H1 (cell line): ENCODE measurements at regions of chr17 and their contacts with region 1.

Region 1: DNA sequence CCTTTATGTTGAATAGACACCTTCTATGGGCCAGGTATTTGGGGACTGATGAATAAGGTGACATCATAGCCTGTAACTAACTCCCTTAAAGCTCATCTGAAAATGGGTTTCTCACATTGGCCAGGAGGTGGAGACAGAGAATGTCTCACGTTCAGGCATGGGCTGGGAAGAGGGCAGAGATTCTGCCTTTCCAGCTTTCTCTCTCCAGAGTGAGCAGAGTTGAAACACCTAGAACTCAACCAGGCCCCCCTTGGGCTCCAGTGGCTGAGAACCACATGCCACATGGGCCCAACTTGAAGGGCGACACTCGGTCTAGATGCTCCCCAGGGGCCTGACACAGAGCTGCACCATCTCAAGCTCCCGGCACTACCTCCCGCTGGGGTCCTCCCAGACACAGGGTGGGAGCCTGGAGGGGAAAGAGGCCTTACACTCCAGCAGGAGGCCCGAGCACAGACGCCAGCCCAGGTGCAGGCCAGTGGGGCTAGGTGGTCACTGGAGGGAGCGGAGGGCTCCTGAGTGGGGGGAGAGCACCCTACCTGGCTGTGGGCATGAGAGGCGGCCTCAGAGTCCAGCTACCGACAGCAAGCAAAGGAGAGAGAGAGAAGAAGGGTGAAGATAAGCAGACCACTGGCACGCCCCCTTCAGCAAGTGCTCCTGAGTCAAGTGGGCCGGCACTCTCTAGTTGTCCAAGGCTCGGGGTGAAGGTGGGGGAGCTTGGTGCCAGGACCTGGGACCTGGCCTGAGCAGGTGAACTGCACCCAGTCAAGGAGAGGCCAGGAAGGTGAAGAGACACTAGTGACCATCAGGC is 55.9 kb downstream of the MYO18A start:
- DNase-seq: peak in 1 of 2 experiments; percentile 57
- H3K4me3 ChIP-seq: no peak overlapping the region
- H3K27ac ChIP-seq: no peak overlapping the region
- H3K4me1 ChIP-seq: peaks cover 0 to 7% (median 2%) of the 10 kb centered on the region in 4 experiments; a peak in 3 of 7 replicates
- H3K27me3 ChIP-seq: no peaks in the 10 kb centered on the region
- CTCF ChIP-seq: peak; percentile 48 to 92 (median 85)
- EP300 ChIP-seq: no peak
- POLR2A ChIP-seq: no peak
- RAD21 ChIP-seq: peak; percentile 92 to 93

Region 2: GRCh38 chr17:29061036-29061435 is 63.3 kb before region 1 on chr17:
- CTCF ChIA-PET with region 1: no interaction called
- POLR2A ChIA-PET with region 1: no interaction called
- DNase-seq: no peak
- H3K4me3 ChIP-seq: no peak overlapping the region
- H3K27ac ChIP-seq: no peak overlapping the region
- H3K4me1 ChIP-seq: peaks cover 9 to 26% (median 18%) of the 10 kb centered on the region in 4 experiments
- H3K27me3 ChIP-seq: 0 out of 7 replicates have a peak, but pooled peaks cover 0 to under 1% (median 0%) of the 10 kb centered on the region in 4 experiments
- CTCF ChIP-seq: no peak
- EP300 ChIP-seq: no peak
- POLR2A ChIP-seq: no peak
- RAD21 ChIP-seq: no peak

Region 3: GRCh38 chr17:29090750-29091603 is 33.3 kb before region 1 on chr17:
- CTCF ChIA-PET with region 1: interaction called, 14 read pairs
- POLR2A ChIA-PET with region 1: no interaction called
- DNase-seq: no peak
- H3K4me3 ChIP-seq: no peak overlapping the region
- H3K27ac ChIP-seq: no peak overlapping the region
- H3K4me1 ChIP-seq: peaks cover 0 to 19% (median 7%) of the 10 kb centered on the region in 4 experiments; a peak in 6 of 7 replicates
- H3K27me3 ChIP-seq: no peaks in the 10 kb centered on the region
- CTCF ChIP-seq: peak in 2 of 3 experiments; percentile 7 to 20; a peak in 2 of 4 replicates
- EP300 ChIP-seq: no peak
- POLR2A ChIP-seq: no peak
- RAD21 ChIP-seq: peak; percentile 36 to 55

Region 4: DNA sequence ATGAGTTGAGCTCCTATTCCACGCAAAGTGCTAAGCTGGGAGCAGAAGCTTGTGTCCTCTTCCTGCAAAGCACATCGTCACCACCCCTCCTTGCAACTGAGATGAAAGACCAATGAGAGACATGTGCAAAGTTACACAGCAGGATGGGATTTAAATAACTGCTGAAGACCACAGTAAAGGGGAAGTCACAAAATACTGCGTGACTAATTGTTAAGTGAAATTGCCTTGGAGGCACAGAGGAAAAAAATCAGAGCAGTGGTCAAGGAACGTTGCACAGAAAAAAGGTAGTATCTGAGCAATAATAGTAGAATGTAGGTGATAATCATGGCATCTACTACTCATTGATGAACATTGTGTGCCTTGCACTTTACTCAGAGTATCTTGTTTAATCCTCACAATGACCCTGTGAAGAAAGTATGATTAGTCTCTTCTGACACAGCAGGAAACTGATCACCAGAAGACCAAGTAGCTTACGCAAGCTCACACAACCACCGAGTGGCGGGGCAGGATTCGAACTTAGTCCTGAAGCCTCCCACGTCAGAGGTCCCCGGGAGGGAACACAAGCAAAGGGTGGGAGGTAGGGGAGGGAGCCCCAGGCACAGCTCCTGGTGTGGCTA is 71.3 kb after region 1 on chr17:
- CTCF ChIA-PET with region 1: interaction called, 17 read pairs
- POLR2A ChIA-PET with region 1: no interaction called
- DNase-seq: no peak
- H3K4me3 ChIP-seq: no peak overlapping the region
- H3K27ac ChIP-seq: no peak overlapping the region
- H3K4me1 ChIP-seq: peaks cover 0 to 3% (median 0%) of the 10 kb centered on the region in 4 experiments; a peak in 1 of 7 replicates
- H3K27me3 ChIP-seq: no peaks in the 10 kb centered on the region
- CTCF ChIP-seq: no peak
- EP300 ChIP-seq: no peak
- POLR2A ChIP-seq: no peak
- RAD21 ChIP-seq: no peak

Region 5: GRCh38 chr17:29241015-29241963 is 117.0 kb after region 1 on chr17:
- CTCF ChIA-PET with region 1: interaction called, 10 read pairs
- POLR2A ChIA-PET with region 1: no interaction called
- DNase-seq: peak in 1 of 2 experiments; percentile 67
- H3K4me3 ChIP-seq: peak overlapping the region in 1 of 4 experiments; percentile 4; a peak in 2 of 8 replicates
- H3K27ac ChIP-seq: peak overlapping the region; percentile 51
- H3K4me1 ChIP-seq: peaks cover 7 to 13% (median 9%) of the 10 kb centered on the region in 4 experiments; a peak in 6 of 7 replicates
- H3K27me3 ChIP-seq: no peaks in the 10 kb centered on the region; a peak in 1 of 7 replicates
- CTCF ChIP-seq: no peak
- EP300 ChIP-seq: no peak
- POLR2A ChIP-seq: 0 out of 3 replicates have a peak, but pooled peaks of 1 of the 2 experiments have one; percentile 44
- RAD21 ChIP-seq: no peak

Region 6: GRCh38 chr17:29252101-29252866 is 128.0 kb after region 1 on chr17:
- CTCF ChIA-PET with region 1: interaction called, 11 read pairs
- POLR2A ChIA-PET with region 1: interaction called, 4 read pairs
- DNase-seq: no peak
- H3K4me3 ChIP-seq: no peak overlapping the region
- H3K27ac ChIP-seq: no peak overlapping the region
- H3K4me1 ChIP-seq: peaks cover 0 to 3% (median 0%) of the 10 kb centered on the region in 4 experiments; a peak in 1 of 7 replicates
- H3K27me3 ChIP-seq: no peaks in the 10 kb centered on the region
- CTCF ChIP-seq: peak in 2 of 3 experiments; percentile 28 to 56; a peak in 2 of 4 replicates
- EP300 ChIP-seq: no peak
- POLR2A ChIP-seq: no peak
- RAD21 ChIP-seq: peak; percentile 37

Region 7: DNA sequence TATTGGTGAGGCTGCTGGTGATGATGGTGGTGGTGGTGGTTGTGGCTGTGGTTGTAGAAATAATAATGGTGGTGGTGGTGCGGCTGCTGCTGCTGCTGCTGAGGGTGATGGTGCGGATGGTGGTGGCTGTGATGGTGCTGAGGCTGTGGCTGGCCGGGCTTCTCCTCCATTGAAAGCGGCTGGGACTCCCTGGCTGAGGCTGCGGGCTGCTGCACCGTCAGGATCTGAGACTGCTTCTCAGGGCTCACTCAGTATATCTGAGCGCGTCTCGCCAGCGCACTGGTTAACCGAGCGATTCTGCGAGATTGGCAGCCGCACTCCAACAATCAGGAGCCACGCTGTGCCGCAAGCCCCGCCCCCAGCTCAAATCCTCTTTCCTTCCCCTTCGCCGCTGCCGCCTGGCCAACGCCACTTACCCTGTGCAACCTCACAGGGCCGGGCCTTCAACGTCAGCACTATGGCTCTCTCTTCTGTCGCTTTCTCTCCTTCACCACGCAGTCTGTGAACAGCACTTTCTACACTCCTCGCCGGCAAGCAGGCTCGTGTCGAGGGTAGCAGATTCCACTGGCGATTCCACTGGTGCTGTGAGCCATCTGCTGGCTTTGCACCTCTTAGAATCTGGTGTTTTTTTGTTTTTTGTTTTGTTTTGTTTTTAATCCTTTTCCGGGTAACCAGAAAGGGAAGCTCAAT is 169.7 kb after region 1 on chr17 and contains the start of gene NUFIP2:
- CTCF ChIA-PET with region 1: interaction called, 13 read pairs
- POLR2A ChIA-PET with region 1: interaction called, 4 read pairs
- DNase-seq: peak; percentile 96 to 100
- H3K4me3 ChIP-seq: peak within 1 kb of the TSS; percentile 90 to 99 (median 96)
- H3K27ac ChIP-seq: peak within 1 kb of the TSS; percentile 89
- H3K4me1 ChIP-seq: peaks cover 0 to 2% (median 0%) of the 10 kb centered on the region in 4 experiments; a peak in 1 of 7 replicates
- H3K27me3 ChIP-seq: no peaks in the 10 kb centered on the region; a peak in 1 of 7 replicates
- CTCF ChIP-seq: no peak
- EP300 ChIP-seq: peak in 1 of 2 experiments; percentile 70; a peak in 1 of 3 replicates
- POLR2A ChIP-seq: peak; percentile 99 to 100
- RAD21 ChIP-seq: no peak
- total RNA-seq, gene NUFIP2: 118 TPM in 2 replicates